Aorta (tissue), 5 donors: ENCODE measurements at regions of chr6 and their contacts with region 1.

Region 1: DNA sequence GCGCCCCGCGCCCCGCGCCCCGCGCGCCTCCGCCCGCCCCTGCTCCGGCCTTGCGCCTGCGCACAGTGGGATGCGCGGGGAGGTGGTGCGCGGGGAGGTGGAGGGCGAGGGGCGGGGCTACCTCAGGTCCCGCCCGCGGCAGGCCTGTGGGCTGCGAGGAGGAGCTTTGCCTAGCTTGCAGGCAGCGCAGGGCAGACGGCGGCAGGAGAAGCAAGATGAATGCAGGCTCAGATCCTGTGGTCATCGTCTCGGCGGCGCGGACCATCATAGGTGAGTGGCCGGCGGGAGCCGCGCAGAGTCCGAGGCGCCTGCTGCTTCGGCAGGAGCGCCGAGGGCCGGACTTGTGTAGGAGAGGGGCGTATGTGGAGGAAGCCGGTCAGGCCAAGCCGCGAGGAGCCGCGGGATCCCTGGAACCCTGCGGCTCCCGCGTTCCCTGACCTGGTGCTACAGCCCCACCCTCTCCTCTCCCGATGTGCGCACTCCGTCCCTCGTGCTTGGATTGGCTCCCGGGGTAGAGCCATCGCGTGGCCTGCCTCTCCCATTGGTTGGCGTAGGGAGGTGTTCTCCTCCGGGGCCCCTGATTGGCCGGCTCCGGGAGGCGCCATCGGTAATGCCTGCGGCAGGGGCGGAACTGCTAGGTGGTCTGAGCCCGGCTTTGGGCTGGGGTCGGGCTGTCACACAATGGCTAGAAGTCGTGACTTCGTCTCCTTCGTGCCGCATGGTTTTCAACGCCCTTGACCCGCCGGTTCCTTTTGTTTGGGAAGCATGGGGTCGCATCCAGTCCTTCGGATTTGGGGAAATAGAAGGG is at the start of gene ACAT2:
- DNase-seq: peak; percentile 98
- ATAC-seq: peak; percentile 99
- H3K4me3 ChIP-seq: peak within 1 kb of the TSS; percentile 61 to 70
- H3K27ac ChIP-seq: peak within 1 kb of the TSS; percentile 76 to 96
- H3K4me1 ChIP-seq: peaks cover 0 to 3% of the 10 kb centered on the region in 2 donors
- H3K27me3 ChIP-seq: no peaks in the 10 kb centered on the region
- total RNA-seq, gene ACAT2: 16.5 to 21.4 TPM

Region 2: GRCh38 chr6:159726918-159727716 is 35.0 kb before region 1 on chr6 and contains the start of gene WTAP:
- intact Hi-C with region 1: loop called in 1 of 2 experiments (anchors 5 kb)
- DNase-seq: peak; percentile 97 to 98
- ATAC-seq: peak; percentile 96
- H3K4me3 ChIP-seq: peak within 1 kb of the TSS; percentile 80 to 81
- H3K27ac ChIP-seq: peak within 1 kb of the TSS; percentile 93 to 97
- H3K4me1 ChIP-seq: peaks cover 0 to 2% of the 10 kb centered on the region in 2 donors
- H3K27me3 ChIP-seq: no peaks in the 10 kb centered on the region
- total RNA-seq, gene WTAP: 91.7 to 94.7 TPM